ENCODE measurements at regions of chr12 and their contacts with region 1.

Region 1: GRCh38 chr12:77817276-77817675 is 13.4 kb upstream of the NAV3 start:
- DNase-seq: no peak
- H3K4me3 ChIP-seq: no peak overlapping the region
- H3K27me3 ChIP-seq: no peaks in the 10 kb centered on the region
- CTCF ChIP-seq: no peak

Region 2: GRCh38 chr12:77204091-77204490 is 613.2 kb before region 1 on chr12:
- CTCF ChIA-PET with region 1: no interaction called
- POLR2A ChIA-PET with region 1: interaction called, 13 read pairs
- DNase-seq: no peak
- H3K4me3 ChIP-seq: no peak overlapping the region
- H3K27me3 ChIP-seq: no peaks in the 10 kb centered on the region
- CTCF ChIP-seq: 0 out of 2 replicates have a peak, but pooled peaks have one; percentile 3